Tibial artery (tissue), 4 donors: ENCODE measurements at regions of chr7 and their contacts with region 1.

Region 1: GRCh38 chr7:157273208-157274093 is 63.4 kb upstream of the DNAJB6 start:
- DNase-seq: peak; percentile 65 to 82
- H3K4me3 ChIP-seq: no peak overlapping the region
- H3K27ac ChIP-seq: peak overlapping the region; percentile 89 to 95
- H3K4me1 ChIP-seq: peaks cover 6 to 36% (median 30%) of the 10 kb centered on the region in 4 donors
- H3K27me3 ChIP-seq: peaks cover 0 to 8% of the 10 kb centered on the region in 2 donors
- CTCF ChIP-seq: peak; percentile 98 to 100

Region 2: DNA sequence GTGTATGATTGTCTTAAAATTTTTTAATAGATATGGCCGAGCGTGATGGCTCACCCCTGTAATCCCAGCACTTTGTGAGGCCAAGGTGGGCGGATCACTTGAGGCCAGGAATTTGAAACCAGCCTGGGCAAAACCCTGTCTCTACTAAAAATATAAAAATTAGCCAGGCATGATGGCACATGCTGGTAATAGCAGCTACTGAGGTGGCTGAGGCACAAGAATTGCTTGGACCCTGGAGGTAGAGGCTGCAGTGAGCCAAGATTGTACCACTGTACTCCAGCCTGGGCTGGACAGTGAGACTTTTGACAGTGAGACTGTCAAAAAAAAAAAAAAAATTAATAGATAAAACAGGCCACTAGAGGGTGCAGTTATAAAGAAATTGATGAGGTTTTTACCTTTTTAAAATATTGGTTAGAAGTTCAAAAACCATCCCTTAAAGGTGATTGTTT is 303.5 kb before region 1 on chr7:
- intact Hi-C with region 1: loop called (anchors 5 kb)
- DNase-seq: no peak
- H3K4me3 ChIP-seq: no peak overlapping the region
- H3K27ac ChIP-seq: no peak overlapping the region
- H3K4me1 ChIP-seq: no peaks in the 10 kb centered on the region
- H3K27me3 ChIP-seq: no peaks in the 10 kb centered on the region
- CTCF ChIP-seq: peak; percentile 33 to 34

Region 3: GRCh38 chr7:157116762-157117161 is 156.7 kb before region 1 on chr7:
- intact Hi-C with region 1: no loop called
- DNase-seq: peak in 1 of 2 donors; percentile 6
- H3K4me3 ChIP-seq: no peak overlapping the region
- H3K27ac ChIP-seq: no peak overlapping the region
- H3K4me1 ChIP-seq: no peaks in the 10 kb centered on the region
- H3K27me3 ChIP-seq: peaks cover 0 to 2% of the 10 kb centered on the region in 2 donors
- CTCF ChIP-seq: no peak

Region 4: GRCh38 chr7:157138424-157139110 is 134.9 kb before region 1 on chr7 and contains the start of gene UBE3C:
- intact Hi-C with region 1: loop called (anchors 10 kb)
- DNase-seq: peak; percentile 80 to 93
- H3K4me3 ChIP-seq: peak within 1 kb of the TSS; percentile 79 to 80
- H3K27ac ChIP-seq: peak within 1 kb of the TSS; percentile 83 to 88
- H3K4me1 ChIP-seq: peaks cover 0 to 33% (median 20%) of the 10 kb centered on the region in 4 donors
- H3K27me3 ChIP-seq: no peaks in the 10 kb centered on the region
- CTCF ChIP-seq: peak in 1 of 2 experiments; percentile 8

Region 5: DNA sequence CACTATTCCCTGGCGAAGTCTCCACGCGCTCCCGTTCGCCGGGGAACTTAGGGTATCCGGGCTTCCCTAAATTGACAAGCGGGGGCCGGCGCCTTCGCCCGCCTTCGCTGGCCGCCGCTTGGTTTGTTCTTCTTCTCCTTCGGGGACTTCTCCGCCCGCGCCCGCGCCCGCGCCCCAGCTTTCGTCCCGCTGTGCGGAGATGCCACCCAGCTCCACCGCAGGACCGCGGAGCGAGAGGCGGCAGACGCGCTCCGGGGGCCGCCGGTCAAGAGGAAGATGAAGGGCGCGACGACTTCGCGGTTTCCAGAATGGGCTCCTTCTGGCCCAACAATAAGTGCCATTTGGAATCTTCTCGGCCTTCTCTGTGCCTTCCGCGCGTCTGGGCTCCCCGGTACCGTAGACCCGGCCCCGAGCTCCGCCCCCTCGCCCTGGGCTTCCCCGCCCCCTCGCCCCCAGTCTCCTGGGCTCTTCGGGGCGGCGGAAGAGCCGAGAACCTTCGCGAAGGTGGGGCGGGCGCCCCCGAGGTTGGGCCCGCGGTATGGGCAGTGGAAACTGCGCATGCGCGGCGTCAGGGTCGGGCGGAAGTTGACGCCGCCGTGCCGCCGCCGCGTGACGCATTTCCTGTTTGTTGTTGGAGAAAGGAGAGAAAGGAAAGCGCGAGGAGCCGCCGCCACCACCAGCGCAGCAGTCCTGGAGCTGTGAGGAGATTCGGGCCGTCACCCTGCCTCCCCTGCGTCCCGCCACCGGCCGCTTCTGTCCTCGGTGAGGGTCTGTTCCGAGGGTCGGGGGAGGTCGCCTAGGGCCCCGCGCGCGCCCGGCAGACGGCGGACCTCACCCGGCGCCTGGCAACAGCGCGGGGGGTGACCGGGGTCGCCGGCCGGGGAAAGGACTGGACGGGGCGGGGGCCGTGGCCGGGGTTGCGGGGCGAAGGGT is 63.2 kb after region 1 on chr7 and contains the start of gene DNAJB6:
- intact Hi-C with region 1: loop called (anchors 5 kb)
- DNase-seq: peak; percentile 90 to 96
- H3K4me3 ChIP-seq: peak within 1 kb of the TSS; percentile 87 to 94
- H3K27ac ChIP-seq: peak within 1 kb of the TSS; percentile 87 to 97
- H3K4me1 ChIP-seq: peaks cover 4 to 46% (median 25%) of the 10 kb centered on the region in 4 donors
- H3K27me3 ChIP-seq: no peaks in the 10 kb centered on the region
- CTCF ChIP-seq: no peak

Region 6: GRCh38 chr7:157386979-157387800 is 113.7 kb after region 1 on chr7:
- intact Hi-C with region 1: loop called (anchors 10 kb)
- DNase-seq: peak; percentile 82 to 87
- H3K4me3 ChIP-seq: no peak overlapping the region
- H3K27ac ChIP-seq: peak overlapping the region; percentile 48 to 57
- H3K4me1 ChIP-seq: peaks cover 0 to 7% (median 7%) of the 10 kb centered on the region in 4 donors
- H3K27me3 ChIP-seq: no peaks in the 10 kb centered on the region
- CTCF ChIP-seq: peak; percentile 80 to 85